Ovary (tissue), 10 donors: ENCODE measurements at regions of chr4 and their contacts with region 1.

Region 1: DNA sequence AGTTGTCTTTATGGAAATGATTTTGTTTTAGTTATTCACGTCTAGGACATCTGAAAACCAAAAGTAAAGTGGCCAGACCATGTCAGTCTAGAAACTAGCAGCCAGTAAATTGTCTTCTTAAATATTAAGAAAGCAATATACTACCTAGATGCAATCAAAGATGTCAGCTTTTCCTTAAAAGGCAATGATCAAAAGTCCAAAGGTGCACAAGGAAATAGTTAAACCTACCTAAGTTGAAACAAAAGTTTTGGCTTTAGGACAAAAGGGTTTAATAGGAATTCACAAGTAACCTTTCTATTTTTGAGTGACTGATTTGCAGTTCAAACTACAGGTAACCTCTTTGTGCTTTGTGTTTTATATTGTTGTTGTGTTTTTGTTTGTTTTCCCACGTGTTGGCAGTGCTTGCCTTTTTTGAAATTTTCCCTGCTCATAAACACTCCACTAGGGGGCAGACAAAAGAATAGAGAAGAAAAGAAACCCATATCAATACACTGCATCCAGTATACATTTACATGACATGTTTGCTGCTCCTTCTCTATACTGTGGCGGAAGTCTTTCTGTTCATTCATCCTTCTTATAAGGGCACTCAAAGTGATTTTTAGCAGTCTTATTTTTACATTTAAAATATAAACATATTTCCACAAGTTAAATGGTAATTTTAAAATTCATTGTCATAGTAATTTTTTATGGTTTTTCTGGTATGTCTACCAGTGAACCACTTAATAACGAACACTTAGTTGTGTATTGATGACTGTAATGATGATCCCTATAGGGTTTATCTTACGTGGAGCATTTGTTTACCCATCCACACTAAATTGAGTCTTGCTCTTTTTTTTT is 62.7 kb downstream of the GAB1 start:
- DNase-seq: no peak
- H3K4me3 ChIP-seq: no peak overlapping the region
- H3K27ac ChIP-seq: no peak overlapping the region
- H3K4me1 ChIP-seq: peaks cover 21% of the 10 kb centered on the region
- H3K27me3 ChIP-seq: no peaks in the 10 kb centered on the region
- CTCF ChIP-seq: peak in 1 of 3 donors; percentile 50
- EP300 ChIP-seq: no peak
- POLR2A ChIP-seq: no peak

Region 2: DNA sequence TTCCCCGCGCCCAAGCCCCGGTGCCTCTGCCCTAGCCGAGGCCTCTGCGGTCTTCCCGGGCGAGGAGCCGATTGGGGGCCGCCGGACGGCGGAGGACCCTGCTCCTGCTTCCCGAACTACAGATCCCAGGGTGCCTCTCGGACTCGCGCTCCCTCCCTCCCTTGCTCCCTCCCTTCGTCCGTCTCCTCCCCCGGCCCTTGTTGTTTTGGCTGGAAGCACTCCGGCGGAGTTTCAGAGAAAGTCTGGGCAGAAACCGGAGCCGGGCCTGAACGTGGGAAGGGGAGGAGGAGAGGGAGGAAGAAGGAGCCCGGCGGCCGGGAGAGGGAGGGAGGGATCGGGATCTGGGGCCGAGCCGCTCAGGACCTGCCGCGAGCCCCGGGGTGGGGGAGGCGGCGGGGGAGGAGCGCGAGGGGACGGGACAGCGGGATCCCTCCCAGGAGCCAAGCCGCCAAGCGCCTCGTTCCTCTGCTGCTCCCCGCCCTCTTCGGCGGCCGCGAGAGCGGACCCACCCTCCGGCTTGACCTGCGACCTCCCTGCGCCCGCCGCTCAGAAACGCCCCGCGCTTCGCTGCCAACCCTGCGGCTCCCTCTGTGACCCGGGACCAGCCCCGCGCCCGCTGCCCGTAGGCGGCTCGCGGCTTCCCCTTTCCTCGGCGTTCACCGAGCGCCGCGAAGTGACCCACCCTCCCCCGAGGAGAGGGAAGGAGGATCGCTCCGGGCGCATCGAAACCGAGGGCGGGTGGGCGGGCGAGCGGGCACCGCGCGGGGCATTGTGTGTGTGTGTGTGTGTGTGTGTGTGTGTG is 63.2 kb before region 1 on chr4:
- intact Hi-C with region 1: loop called (anchors 5 to 10 kb)
- DNase-seq: peak; percentile 89 to 91 (median 89)
- H3K4me3 ChIP-seq: peak overlapping the region; percentile 86
- H3K27ac ChIP-seq: peak overlapping the region; percentile 95 to 98
- H3K4me1 ChIP-seq: peaks cover 1% of the 10 kb centered on the region
- H3K27me3 ChIP-seq: no peaks in the 10 kb centered on the region
- CTCF ChIP-seq: no peak
- EP300 ChIP-seq: no peak
- POLR2A ChIP-seq: peak; percentile 49

Region 3: DNA sequence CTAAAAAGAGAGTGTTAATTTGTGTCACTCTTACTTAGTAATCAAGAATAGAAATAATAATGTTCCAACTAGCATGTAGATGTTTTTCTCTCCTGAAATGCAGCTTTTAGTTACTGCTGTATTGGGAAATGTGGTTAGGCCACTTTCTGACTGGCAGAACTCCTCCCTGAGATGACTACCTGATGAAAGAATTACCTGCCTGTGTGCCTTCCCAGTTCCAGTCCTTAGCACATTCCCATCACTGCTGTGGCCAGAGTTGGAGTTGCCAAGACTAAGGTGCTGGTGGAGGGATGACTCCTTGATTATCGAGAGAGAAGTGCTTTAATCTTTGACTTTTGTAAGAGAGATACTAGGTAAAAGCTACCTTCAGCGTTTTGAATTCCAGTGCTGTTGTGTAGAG is 53.1 kb before region 1 on chr4:
- intact Hi-C with region 1: loop called in 1 of 4 experiments (anchors 10 kb)
- DNase-seq: no peak
- H3K4me3 ChIP-seq: no peak overlapping the region
- H3K27ac ChIP-seq: no peak overlapping the region
- H3K4me1 ChIP-seq: peaks cover 15% of the 10 kb centered on the region
- H3K27me3 ChIP-seq: no peaks in the 10 kb centered on the region
- CTCF ChIP-seq: no peak
- EP300 ChIP-seq: no peak
- POLR2A ChIP-seq: no peak